Activated CD4-positive, alpha-beta T cell treated with anti-CD3 and anti-CD28 coated beads, Interleukin-2, amount 10 ng/mL, durations not matched to agents 24 days and 14 days (primary cell): ENCODE measurements at regions of chr2 and their contacts with region 1.

Region 1: DNA sequence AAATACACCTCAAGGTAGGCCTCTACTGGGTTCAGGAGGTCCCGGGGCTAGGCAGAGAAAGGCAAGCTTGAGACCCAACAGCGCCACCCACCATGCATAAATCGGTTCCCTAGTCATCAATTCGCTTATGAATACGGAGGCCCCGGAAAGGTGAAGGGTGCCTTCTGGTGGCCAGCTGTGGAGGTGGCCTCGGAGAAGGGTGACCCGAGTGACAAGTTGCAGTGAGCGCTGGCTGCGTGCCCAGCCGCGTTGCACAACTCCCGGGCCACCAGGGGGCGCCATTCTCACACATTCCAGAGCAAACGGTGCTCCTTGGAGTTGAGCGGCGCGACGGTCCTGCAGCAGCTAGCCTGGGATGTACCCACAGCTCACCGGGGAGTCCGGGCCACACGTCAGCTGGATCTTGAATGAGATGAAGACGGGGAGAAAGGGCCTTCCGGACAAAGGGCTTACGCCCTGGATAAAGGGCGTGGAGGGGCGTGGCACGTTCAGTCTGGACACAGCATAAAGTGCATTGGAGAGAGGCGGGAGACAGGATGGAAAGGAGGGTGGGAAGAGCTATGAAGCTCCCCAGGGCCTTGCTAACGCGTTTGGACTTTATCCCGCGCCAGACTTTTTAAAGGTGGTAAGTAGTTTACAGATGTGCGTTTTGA is 20.4 kb downstream of the TMSB10 start:
- DNase-seq: peak; percentile 99
- H3K4me3 Mint-ChIP-seq: peak overlapping the region; percentile 93
- H3K27ac Mint-ChIP-seq: peak overlapping the region; percentile 93
- H3K4me1 Mint-ChIP-seq: peaks cover 37% of the 10 kb centered on the region
- H3K27me3 Mint-ChIP-seq: no peaks in the 10 kb centered on the region

Region 2: GRCh38 chr2:84495539-84496146 is 430.2 kb before region 1 on chr2:
- intact Hi-C with region 1: loop called (anchors 1 kb)
- DNase-seq: peak; percentile 84
- H3K4me3 Mint-ChIP-seq: no peak overlapping the region
- H3K27ac Mint-ChIP-seq: no peak overlapping the region
- H3K4me1 Mint-ChIP-seq: peaks cover 10% of the 10 kb centered on the region
- H3K27me3 Mint-ChIP-seq: peaks cover 8% of the 10 kb centered on the region

Region 3: DNA sequence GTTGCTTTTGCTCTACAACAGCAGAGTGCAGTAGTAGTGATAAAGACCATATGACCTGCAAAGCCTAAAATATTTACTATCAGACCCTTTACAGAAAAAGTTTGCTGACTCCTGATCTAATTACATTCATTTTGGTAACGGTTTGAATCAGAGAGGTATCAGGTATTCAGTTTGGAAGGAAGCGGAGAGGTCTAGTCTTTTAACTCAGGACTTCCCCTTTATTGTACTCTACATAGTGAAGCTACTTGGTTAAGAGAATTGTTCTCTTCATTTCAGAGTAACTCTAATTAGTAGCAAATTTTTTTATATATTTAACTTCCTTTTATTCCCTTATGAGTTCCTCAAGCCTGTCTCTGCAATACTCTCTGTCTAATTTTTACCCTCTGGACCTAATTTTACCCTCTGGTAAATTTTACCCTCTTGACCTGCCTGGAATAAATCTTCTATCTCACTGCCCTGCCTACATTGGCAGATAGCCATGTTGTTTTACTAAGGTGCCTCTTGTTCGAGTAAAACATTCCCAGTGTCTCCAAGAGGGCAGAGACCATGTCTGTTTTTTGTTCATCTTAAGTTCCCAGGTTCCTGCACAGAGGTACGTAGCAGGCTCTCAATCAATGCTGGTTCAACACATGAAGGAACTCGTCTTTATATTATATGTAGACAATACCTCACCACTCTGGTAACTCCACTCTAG is 238.9 kb before region 1 on chr2:
- intact Hi-C with region 1: no loop called
- DNase-seq: no peak
- H3K4me3 Mint-ChIP-seq: no peak overlapping the region
- H3K27ac Mint-ChIP-seq: peak overlapping the region; percentile 23
- H3K4me1 Mint-ChIP-seq: peaks cover 5% of the 10 kb centered on the region
- H3K27me3 Mint-ChIP-seq: no peaks in the 10 kb centered on the region

Region 4: GRCh38 chr2:84817239-84817655 is 108.6 kb before region 1 on chr2:
- intact Hi-C with region 1: loop called (anchors 5 kb)
- DNase-seq: no peak
- H3K4me3 Mint-ChIP-seq: peak overlapping the region; percentile 9
- H3K27ac Mint-ChIP-seq: peak overlapping the region; percentile 56
- H3K4me1 Mint-ChIP-seq: peaks cover 32% of the 10 kb centered on the region
- H3K27me3 Mint-ChIP-seq: no peaks in the 10 kb centered on the region

Region 5: DNA sequence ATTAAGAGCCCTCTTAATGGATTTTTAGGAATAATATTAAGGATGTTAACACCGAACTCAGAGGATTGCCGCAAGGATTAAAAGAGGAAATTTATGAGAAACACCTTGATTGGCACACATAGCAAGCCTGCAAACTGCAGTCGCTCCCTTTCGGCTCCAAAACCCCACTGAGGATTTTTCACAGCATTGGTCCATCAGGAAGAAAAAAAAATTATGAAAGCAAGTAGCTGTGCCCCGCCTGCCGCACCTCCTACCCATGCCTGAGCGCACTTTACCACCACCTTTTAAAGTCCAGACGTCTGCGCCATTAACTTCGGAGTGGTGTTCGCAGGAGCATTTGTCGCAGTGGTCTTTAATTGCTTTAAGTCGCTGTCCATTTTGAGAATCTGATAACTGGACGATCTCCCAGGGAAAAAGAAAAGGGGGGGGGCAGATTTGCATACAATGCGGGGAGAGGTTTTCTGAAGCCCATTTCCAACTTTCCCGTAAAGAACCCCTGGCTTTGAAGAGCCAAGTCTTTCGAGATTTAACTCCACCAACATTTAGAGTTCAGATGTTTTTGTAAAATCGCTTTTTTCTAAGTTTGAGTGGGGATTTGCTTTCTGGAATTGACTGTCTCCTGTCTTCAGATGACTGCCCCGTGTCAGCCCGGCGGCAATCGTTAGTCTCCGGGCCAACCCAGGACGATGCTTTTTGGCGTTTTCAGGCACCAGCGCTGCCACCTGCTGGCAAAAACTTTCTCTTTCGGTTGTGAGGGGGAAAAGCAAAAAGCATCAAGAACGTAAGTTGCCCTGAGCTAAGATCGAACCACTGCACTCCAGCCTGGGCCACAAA is 44.1 kb before region 1 on chr2:
- intact Hi-C with region 1: loop called (anchors 1 kb)
- DNase-seq: peak; percentile 96
- H3K4me3 Mint-ChIP-seq: peak overlapping the region; percentile 94
- H3K27ac Mint-ChIP-seq: peak overlapping the region; percentile 96
- H3K4me1 Mint-ChIP-seq: peaks cover 54% of the 10 kb centered on the region
- H3K27me3 Mint-ChIP-seq: no peaks in the 10 kb centered on the region

Region 6: GRCh38 chr2:84946204-84947009 is 20.6 kb after region 1 on chr2:
- intact Hi-C with region 1: loop called (anchors 1 kb)
- DNase-seq: peak; percentile 89
- H3K4me3 Mint-ChIP-seq: peak overlapping the region; percentile 50
- H3K27ac Mint-ChIP-seq: peak overlapping the region; percentile 89
- H3K4me1 Mint-ChIP-seq: peaks cover 45% of the 10 kb centered on the region
- H3K27me3 Mint-ChIP-seq: no peaks in the 10 kb centered on the region

Region 7: DNA sequence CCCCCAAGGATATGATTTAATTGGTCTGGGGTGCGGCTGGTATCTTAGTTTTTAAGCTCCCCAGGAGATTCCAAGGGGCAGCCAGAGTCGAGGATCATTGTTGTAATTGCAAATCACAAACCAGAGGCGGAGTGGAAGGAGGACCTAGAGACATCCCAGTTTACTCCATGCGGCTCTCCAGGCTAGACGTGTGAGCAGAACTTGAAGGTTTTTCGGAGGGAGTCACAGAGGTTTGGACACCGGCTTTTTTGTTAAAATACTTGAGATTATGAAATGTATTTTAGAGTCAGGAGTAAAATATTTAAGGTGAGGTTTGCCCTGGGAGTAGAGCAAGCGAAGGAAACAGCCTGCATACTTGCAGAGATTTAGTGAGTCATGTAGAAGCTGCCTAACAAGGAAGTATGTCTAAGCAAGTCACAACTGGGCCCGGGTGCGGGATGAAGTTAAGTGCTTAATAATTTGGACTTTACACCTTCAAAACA is 362.4 kb after region 1 on chr2:
- intact Hi-C with region 1: loop called (anchors 1 kb)
- DNase-seq: no peak
- H3K4me3 Mint-ChIP-seq: no peak overlapping the region
- H3K27ac Mint-ChIP-seq: no peak overlapping the region
- H3K4me1 Mint-ChIP-seq: peaks cover 21% of the 10 kb centered on the region
- H3K27me3 Mint-ChIP-seq: no peaks in the 10 kb centered on the region